ENCODE measurements at regions of chr2 and their contacts with region 1.

Region 1: GRCh38 chr2:191691016-191691735 is 13.2 kb downstream of the NABP1 start:
- DNase-seq: peak; percentile 81
- ATAC-seq: peak; percentile 76
- H3K4me3 ChIP-seq: no peak overlapping the region
- H3K27ac ChIP-seq: no peak overlapping the region
- H3K4me1 ChIP-seq: peaks cover 37% of the 10 kb centered on the region
- H3K27me3 ChIP-seq: no peaks in the 10 kb centered on the region
- CTCF ChIP-seq: peak; percentile 89
- EP300 ChIP-seq: no peak
- POLR2A ChIP-seq: no peak
- RAD21 ChIP-seq: peak; percentile 84

Region 2: GRCh38 chr2:191165176-191165643 is 526.0 kb before region 1 on chr2:
- CTCF ChIA-PET with region 1: no interaction called
- POLR2A ChIA-PET with region 1: no interaction called
- in situ Hi-C with region 1: no loop called
- intact Hi-C with region 1: loop called (anchors 5 kb)
- DNase-seq: peak; percentile 23
- ATAC-seq: peak; percentile 82
- H3K4me3 ChIP-seq: no peak overlapping the region
- H3K27ac ChIP-seq: no peak overlapping the region
- H3K4me1 ChIP-seq: peaks cover 16% of the 10 kb centered on the region
- H3K27me3 ChIP-seq: no peaks in the 10 kb centered on the region
- CTCF ChIP-seq: peak; percentile 60
- EP300 ChIP-seq: no peak
- POLR2A ChIP-seq: no peak
- RAD21 ChIP-seq: no peak

Region 3: DNA sequence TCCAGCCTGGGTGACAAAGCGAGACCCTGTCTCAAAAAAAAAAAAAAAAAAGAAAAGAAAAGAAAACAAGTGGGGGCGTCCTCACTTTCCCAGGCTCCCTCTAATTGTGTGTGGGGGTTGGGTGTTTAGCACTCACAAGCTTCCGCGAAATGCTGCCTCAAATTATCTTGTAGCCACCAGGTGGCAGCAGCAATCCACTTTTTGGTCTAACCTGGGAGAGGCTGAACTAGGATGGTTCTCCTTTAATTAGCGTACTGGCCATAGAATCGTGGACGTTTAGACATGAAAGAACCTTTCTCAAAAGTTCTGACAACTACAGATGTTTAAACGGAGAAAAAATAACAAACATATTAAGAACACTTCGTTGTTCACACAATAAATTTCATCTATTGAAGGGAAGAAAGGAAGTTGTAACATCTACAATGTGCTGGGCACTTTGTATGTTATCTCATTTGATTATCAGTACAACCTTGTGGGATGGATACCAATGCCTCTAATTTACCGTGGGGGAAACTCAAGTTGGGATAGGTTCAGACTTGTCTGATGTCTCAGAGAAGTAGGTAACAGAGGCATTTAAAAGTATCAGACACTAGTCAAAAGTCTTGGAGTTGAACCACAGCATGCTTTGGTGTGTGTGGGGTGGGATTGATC is 136.0 kb before region 1 on chr2:
- CTCF ChIA-PET with region 1: interaction called, 25 read pairs
- POLR2A ChIA-PET with region 1: no interaction called
- in situ Hi-C with region 1: no loop called
- intact Hi-C with region 1: loop called (anchors 1 kb)
- DNase-seq: peak; percentile 73
- ATAC-seq: peak; percentile 97
- H3K4me3 ChIP-seq: no peak overlapping the region
- H3K27ac ChIP-seq: no peak overlapping the region
- H3K4me1 ChIP-seq: no peaks in the 10 kb centered on the region
- H3K27me3 ChIP-seq: peaks cover 0 to 7% of the 10 kb centered on the region in 2 experiments; a peak in 2 of 5 replicates
- CTCF ChIP-seq: peak; percentile 89
- EP300 ChIP-seq: no peak
- POLR2A ChIP-seq: no peak
- RAD21 ChIP-seq: peak; percentile 79

Region 4: DNA sequence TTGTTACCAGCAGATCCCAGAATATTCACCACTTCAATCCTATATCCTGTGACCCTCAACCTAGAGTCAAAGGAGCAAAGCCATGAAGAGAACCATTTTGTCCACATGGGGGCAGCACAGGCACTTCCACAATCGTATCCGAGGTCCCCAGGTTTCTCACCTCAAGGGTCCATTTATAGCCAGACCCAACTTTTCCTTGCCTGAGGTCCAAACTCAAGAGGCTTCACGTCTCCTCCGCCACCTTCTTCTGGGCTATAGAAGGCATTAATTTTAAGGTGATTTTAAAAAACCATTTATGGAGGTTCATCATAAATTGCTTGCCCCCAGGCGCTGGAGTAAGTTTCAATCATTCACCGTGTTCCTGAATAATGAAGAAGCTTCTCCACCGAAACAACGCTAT is 124.8 kb before region 1 on chr2:
- CTCF ChIA-PET with region 1: interaction called, 58 read pairs
- POLR2A ChIA-PET with region 1: interaction called, 4 read pairs
- in situ Hi-C with region 1: loop called (anchors 5 kb)
- intact Hi-C with region 1: loop called (anchors 1 kb)
- DNase-seq: peak; percentile 71
- ATAC-seq: peak; percentile 96
- H3K4me3 ChIP-seq: no peak overlapping the region
- H3K27ac ChIP-seq: no peak overlapping the region
- H3K4me1 ChIP-seq: peaks cover 11% of the 10 kb centered on the region
- H3K27me3 ChIP-seq: no peaks in the 10 kb centered on the region
- CTCF ChIP-seq: peak; percentile 88
- EP300 ChIP-seq: no peak
- POLR2A ChIP-seq: no peak
- RAD21 ChIP-seq: peak; percentile 75

Region 5: DNA sequence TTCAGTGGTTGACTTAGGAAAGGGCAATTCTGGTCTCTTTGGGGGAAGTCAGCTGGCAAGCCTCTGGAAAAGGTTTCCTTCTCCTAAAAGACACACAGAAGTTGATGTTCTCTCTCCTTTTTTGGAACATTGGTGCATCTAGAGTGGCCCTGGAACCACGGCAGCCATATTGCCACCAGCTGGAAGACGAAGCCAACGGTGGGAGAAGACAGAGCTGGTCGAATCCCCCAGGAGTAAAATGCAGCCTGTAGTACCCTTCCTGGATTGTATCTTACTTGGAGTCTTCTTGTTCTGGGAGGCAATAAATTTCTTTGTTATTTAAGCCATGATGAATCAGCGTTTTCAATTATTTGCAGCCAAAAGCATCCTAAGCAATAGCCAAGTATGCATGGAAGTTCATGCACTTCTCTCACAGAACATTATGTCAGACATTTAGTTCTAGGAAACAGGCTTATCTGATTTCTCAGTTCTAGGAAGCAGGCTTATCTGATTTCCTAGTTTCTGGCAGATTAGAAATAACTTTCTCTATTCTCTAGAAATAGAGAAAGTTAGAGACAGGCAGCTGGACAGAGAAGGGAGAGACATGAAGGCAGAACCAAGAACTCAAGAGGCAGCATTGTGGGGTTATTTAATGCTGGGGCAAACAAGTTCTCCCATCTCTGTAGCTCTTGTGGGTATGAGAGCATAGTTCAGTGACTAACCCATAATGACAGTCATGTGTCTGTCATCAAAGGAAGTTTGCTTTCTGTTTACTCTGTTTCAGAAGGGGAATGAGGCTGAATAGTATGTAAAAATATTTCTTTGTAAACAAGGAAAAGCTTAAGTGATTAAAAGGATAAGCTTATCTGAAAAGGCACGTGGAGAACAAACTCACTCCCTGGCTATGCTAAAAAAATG is 53.7 kb before region 1 on chr2:
- CTCF ChIA-PET with region 1: no interaction called
- POLR2A ChIA-PET with region 1: interaction called, 5 read pairs
- in situ Hi-C with region 1: no loop called
- intact Hi-C with region 1: loop called (anchors 5 kb)
- DNase-seq: peak; percentile 95
- ATAC-seq: peak; percentile 96
- H3K4me3 ChIP-seq: peak overlapping the region in 2 of 3 experiments; percentile 25 to 27; a peak in 1 of 6 replicates
- H3K27ac ChIP-seq: peak overlapping the region; percentile 75
- H3K4me1 ChIP-seq: peaks cover 58% of the 10 kb centered on the region
- H3K27me3 ChIP-seq: no peaks in the 10 kb centered on the region
- CTCF ChIP-seq: no peak
- EP300 ChIP-seq: peak; percentile 46 to 98; a peak in 3 of 4 replicates
- POLR2A ChIP-seq: peak in 1 of 2 experiments; percentile 28; a peak in 1 of 4 replicates
- RAD21 ChIP-seq: no peak

Region 6: GRCh38 chr2:191797960-191798876 is 107.0 kb after region 1 on chr2:
- CTCF ChIA-PET with region 1: no interaction called
- POLR2A ChIA-PET with region 1: no interaction called
- in situ Hi-C with region 1: no loop called
- intact Hi-C with region 1: no loop called
- DNase-seq: no peak
- ATAC-seq: no peak
- H3K4me3 ChIP-seq: no peak overlapping the region
- H3K27ac ChIP-seq: no peak overlapping the region
- H3K4me1 ChIP-seq: peaks cover 5% of the 10 kb centered on the region
- H3K27me3 ChIP-seq: no peaks in the 10 kb centered on the region
- CTCF ChIP-seq: no peak
- EP300 ChIP-seq: no peak
- POLR2A ChIP-seq: no peak
- RAD21 ChIP-seq: no peak

Measured in HepG2 (cell line).